A673 (cell line): ENCODE measurements at regions of chr7 and their contacts with region 1.

Region 1: GRCh38 chr7:122813845-122814244 is 72.4 kb downstream of the CADPS2 start:
- DNase-seq: no peak
- H3K4me3 ChIP-seq: no peak overlapping the region
- H3K27ac ChIP-seq: no peak overlapping the region
- H3K4me1 ChIP-seq: peaks cover 6% of the 10 kb centered on the region
- H3K27me3 ChIP-seq: no peaks in the 10 kb centered on the region
- CTCF ChIP-seq: no peak

Region 2: GRCh38 chr7:121620953-121621606 is 1192.8 kb before region 1 on chr7:
- CTCF ChIA-PET with region 1: no interaction called
- POLR2A ChIA-PET with region 1: interaction called, 26 read pairs
- intact Hi-C with region 1: no loop called
- DNase-seq: no peak
- H3K4me3 ChIP-seq: no peak overlapping the region
- H3K27ac ChIP-seq: no peak overlapping the region
- H3K4me1 ChIP-seq: peaks cover 7% of the 10 kb centered on the region
- H3K27me3 ChIP-seq: no peaks in the 10 kb centered on the region
- CTCF ChIP-seq: no peak